ENCODE measurements at regions of chr2 and their contacts with region 1.

Region 1: DNA sequence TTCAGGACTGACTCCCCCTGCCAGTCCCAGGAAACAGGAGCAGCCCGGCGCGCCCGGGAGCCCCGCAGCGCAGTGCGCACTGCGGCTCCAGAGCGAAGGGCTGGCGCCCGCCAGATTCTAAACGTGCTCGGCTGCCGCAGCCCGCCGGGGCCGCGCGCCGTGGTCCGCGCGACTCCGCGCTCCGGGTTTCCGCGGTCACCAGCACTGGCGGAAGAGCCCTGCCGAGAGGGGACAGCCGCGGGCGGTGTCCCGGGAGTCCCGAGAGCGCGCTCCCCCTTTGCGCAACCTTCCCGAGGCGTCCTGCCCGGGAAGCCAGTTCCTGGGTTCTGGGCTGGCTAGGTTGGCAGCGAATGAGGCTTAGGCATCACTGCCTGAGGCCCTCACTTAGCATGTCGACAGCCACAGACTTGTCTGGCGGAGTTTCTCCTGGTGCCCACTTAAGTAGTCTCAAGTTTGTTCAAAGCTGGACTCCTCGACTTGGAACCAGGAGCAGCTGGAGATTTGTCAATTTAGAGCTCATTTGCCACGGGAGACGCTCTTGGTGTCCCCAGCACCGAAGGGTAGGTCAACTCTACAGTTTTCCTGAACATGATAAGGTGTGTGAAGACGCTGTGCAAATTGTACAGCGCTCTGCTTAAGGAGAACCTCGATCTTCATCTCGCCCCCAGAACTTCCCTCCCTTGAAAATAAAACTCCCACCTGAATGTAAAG is 1.5 kb upstream of the VSNL1 start:
- DNase-seq: peak; percentile 96
- H3K4me3 Mint-ChIP-seq: peak overlapping the region; percentile 87
- H3K27ac Mint-ChIP-seq: peak overlapping the region; percentile 85
- H3K4me1 Mint-ChIP-seq: peaks cover 28% of the 10 kb centered on the region
- H3K27me3 Mint-ChIP-seq: no peaks in the 10 kb centered on the region
- CTCF ChIP-seq: no peak

Region 2: DNA sequence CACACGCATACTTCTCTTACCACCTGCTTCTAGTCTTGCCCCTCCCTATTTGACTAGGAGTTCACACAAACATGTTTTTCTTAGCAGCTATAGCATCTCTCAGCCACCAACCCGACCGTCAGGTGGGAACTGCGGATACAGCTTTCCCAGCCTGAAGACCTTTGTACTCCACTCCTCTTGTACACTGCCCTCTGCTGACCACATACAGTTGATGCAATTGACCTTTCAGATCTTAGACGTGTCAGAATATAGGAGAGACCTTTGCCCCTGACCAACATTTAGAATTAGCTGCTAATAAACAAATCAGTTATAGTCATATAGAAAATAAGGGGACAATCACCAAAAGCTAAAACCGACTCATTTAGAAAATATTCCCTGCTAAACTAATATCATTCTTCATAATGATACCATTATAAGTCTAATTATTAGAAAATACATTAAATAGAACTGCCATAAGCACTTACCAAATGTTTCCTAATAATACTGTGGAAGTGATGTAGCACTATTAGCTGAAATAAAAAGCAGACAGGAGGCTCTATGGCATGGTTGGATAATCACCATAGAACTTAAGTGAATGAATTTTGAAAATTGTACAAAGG is 229.2 kb before region 1 on chr2:
- CTCF ChIA-PET with region 1: interaction called, 5 read pairs
- POLR2A ChIA-PET with region 1: no interaction called
- intact Hi-C with region 1: loop called (anchors 10 kb)
- DNase-seq: peak; percentile 83
- H3K4me3 Mint-ChIP-seq: no peak overlapping the region
- H3K27ac Mint-ChIP-seq: no peak overlapping the region
- H3K4me1 Mint-ChIP-seq: no peaks in the 10 kb centered on the region
- H3K27me3 Mint-ChIP-seq: no peaks in the 10 kb centered on the region
- CTCF ChIP-seq: peak; percentile 80

Region 3: DNA sequence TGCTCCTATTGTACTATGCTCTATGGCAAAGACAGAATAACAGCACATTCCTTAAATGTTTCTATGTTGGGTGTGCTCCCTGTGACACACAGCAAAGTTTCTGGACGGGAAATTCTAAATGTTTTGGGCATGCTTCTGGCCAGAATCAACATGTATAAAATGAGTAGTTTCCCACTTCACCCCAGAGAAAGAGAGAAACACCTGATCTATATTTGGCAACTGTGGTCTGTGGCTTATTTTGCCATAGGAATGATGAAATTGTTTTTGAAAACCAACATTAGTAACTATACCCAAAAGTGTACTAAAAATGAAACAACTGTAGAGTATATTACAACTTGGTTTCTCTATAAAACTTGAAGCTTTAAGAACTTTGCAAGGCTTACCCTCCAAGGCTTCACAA is 109.9 kb before region 1 on chr2:
- CTCF ChIA-PET with region 1: no interaction called
- POLR2A ChIA-PET with region 1: interaction called, 10 read pairs
- intact Hi-C with region 1: loop called (anchors 5 kb)
- DNase-seq: peak; percentile 79
- H3K4me3 Mint-ChIP-seq: no peak overlapping the region
- H3K27ac Mint-ChIP-seq: peak overlapping the region; percentile 90
- H3K4me1 Mint-ChIP-seq: peaks cover 13% of the 10 kb centered on the region
- H3K27me3 Mint-ChIP-seq: no peaks in the 10 kb centered on the region
- CTCF ChIP-seq: no peak

Region 4: GRCh38 chr2:17518212-17519154 is 20.5 kb before region 1 on chr2 and contains the start of gene RAD51AP2:
- CTCF ChIA-PET with region 1: no interaction called
- POLR2A ChIA-PET with region 1: interaction called, 22 read pairs
- intact Hi-C with region 1: loop called (anchors 2 kb)
- DNase-seq: peak; percentile 84
- H3K4me3 Mint-ChIP-seq: peak within 1 kb of the TSS; percentile 76
- H3K27ac Mint-ChIP-seq: peak within 1 kb of the TSS; percentile 21
- H3K4me1 Mint-ChIP-seq: peaks cover 5% of the 10 kb centered on the region
- H3K27me3 Mint-ChIP-seq: no peaks in the 10 kb centered on the region
- CTCF ChIP-seq: no peak
- total RNA-seq, gene RAD51AP2: 0.10 and 0.14 TPM in 2 replicates

Region 5: GRCh38 chr2:17620280-17620679 is 81.3 kb after region 1 on chr2:
- CTCF ChIA-PET with region 1: interaction called, 5 read pairs
- POLR2A ChIA-PET with region 1: interaction called, 48 read pairs
- intact Hi-C with region 1: no loop called
- DNase-seq: peak; percentile 88
- H3K4me3 Mint-ChIP-seq: peak overlapping the region; percentile 19
- H3K27ac Mint-ChIP-seq: no peak overlapping the region
- H3K4me1 Mint-ChIP-seq: peaks cover 34% of the 10 kb centered on the region
- H3K27me3 Mint-ChIP-seq: no peaks in the 10 kb centered on the region
- CTCF ChIP-seq: no peak

Region 6: DNA sequence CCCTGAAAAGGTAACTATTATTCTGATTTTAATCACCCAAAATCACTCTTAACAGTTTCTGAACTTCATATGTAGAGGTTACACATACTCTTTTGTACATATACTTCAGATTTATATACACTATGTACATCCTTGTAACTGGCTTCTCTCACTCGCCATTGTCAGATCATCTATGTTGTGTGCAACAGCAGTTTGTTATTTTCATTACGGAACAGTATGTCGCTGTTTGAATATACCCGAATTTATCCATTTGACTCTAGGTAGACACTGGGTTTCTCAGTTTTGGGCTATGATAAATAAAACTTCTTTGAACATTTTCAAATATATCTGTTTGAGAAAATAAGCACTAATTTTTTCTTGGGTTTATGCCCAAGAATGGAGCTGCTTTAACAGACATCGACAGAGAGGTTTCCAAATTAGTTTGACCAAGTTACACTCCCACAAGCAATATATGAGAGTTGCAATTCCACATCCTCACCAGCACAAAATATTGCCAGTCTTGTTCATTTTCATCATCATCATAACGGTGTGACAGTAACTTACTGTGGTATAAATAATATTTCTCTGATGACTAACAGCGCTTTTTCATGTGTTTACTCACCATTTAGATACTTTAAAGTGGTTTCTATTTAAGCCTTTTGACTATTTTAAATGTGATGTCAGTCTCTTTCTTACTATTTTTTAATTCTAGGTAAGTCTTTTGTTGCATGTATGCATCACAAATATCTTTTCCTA is 133.8 kb after region 1 on chr2:
- CTCF ChIA-PET with region 1: interaction called, 6 read pairs
- POLR2A ChIA-PET with region 1: interaction called, 13 read pairs
- intact Hi-C with region 1: loop called (anchors 1 kb)
- DNase-seq: peak; percentile 47
- H3K4me3 Mint-ChIP-seq: no peak overlapping the region
- H3K27ac Mint-ChIP-seq: no peak overlapping the region
- H3K4me1 Mint-ChIP-seq: peaks cover 11% of the 10 kb centered on the region
- H3K27me3 Mint-ChIP-seq: no peaks in the 10 kb centered on the region
- CTCF ChIP-seq: no peak

Measured in MCF 10A (cell line).